GM12878 (cell line): ENCODE measurements at regions of chr3 and their contacts with region 1.

Region 1: DNA sequence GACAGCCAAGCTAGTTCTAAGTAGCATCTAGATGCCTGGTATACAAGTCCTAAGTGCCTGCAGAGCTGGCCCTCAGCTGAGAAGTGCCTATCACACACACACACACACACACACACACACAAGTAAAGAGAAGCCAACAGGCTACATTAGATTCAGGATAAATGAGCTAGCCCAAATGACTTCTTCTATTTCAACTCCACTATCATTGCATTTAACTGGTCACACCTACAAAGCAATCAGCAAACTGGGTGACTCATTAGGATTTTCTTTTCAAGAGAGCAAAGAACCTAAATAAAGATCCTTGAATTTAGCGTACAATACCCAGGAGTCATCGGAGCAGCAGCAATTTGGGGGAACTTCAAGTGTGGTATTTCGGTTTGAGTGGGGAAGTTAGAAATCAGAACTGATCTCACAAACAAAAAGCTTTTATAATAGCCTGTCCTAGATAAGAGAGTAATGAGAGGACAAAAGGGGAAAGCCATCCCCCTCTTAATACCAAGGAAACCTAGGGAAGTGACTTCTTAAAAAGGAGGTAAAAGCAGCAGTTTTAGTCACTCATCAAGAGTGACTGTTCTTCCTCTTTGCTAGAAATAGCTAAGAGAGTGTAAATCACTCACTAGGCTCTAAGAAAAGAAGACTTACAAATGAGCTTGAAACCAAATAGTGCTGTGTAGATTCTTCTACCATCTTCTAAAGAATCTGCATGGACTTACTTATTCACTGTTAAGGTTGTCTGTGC is 112.7 kb downstream of the TNIK start:
- DNase-seq: peak; percentile 95
- ATAC-seq: peak; percentile 84
- H3K4me3 ChIP-seq: peak overlapping the region; percentile 33
- H3K27ac ChIP-seq: peak overlapping the region; percentile 94
- H3K4me1 ChIP-seq: peaks cover 78% of the 10 kb centered on the region
- H3K27me3 ChIP-seq: no peaks in the 10 kb centered on the region
- CTCF ChIP-seq: no peak
- EP300 ChIP-seq: peak in 1 of 2 experiments; percentile 70; a peak in 3 of 4 replicates
- POLR2A ChIP-seq: no peak
- RAD21 ChIP-seq: no peak

Region 2: GRCh38 chr3:171086914-171087313 is 260.6 kb before region 1 on chr3:
- CTCF ChIA-PET with region 1: no interaction called
- POLR2A ChIA-PET with region 1: no interaction called
- RAD21 ChIA-PET with region 1: no interaction called
- SMC1A ChIA-PET with region 1: no interaction called
- in situ Hi-C with region 1: no loop called
- intact Hi-C with region 1: no loop called
- DNase-seq: no peak
- ATAC-seq: no peak
- H3K4me3 ChIP-seq: no peak overlapping the region
- H3K27ac ChIP-seq: no peak overlapping the region
- H3K4me1 ChIP-seq: no peaks in the 10 kb centered on the region
- H3K27me3 ChIP-seq: no peaks in the 10 kb centered on the region
- CTCF ChIP-seq: no peak
- EP300 ChIP-seq: no peak
- POLR2A ChIP-seq: no peak
- RAD21 ChIP-seq: no peak

Region 3: GRCh38 chr3:171257251-171258203 is 89.9 kb before region 1 on chr3:
- CTCF ChIA-PET with region 1: interaction called, 9 read pairs
- POLR2A ChIA-PET with region 1: interaction called, 7 read pairs
- RAD21 ChIA-PET with region 1: interaction called, 19 read pairs
- SMC1A ChIA-PET with region 1: interaction called, 80 read pairs
- in situ Hi-C with region 1: no loop called
- intact Hi-C with region 1: loop called (anchors 2 kb)
- DNase-seq: peak; percentile 76
- ATAC-seq: peak; percentile 74
- H3K4me3 ChIP-seq: peak overlapping the region; percentile 31; the same call in 1 of the 2 replicates
- H3K27ac ChIP-seq: peak overlapping the region; percentile 87
- H3K4me1 ChIP-seq: peaks cover 86% of the 10 kb centered on the region
- H3K27me3 ChIP-seq: no peaks in the 10 kb centered on the region
- CTCF ChIP-seq: no peak
- EP300 ChIP-seq: peak in 1 of 2 experiments; percentile 63; a peak in 2 of 4 replicates
- POLR2A ChIP-seq: no peak
- RAD21 ChIP-seq: 0 out of 2 replicates have a peak, but pooled peaks have one; percentile 10

Region 4: GRCh38 chr3:171306631-171307030 is 40.8 kb before region 1 on chr3:
- CTCF ChIA-PET with region 1: interaction called, 5 read pairs
- POLR2A ChIA-PET with region 1: interaction called, 4 read pairs
- RAD21 ChIA-PET with region 1: interaction called, 6 read pairs
- SMC1A ChIA-PET with region 1: interaction called, 70 read pairs
- in situ Hi-C with region 1: no loop called
- intact Hi-C with region 1: no loop called
- DNase-seq: no peak
- ATAC-seq: peak; percentile 15
- H3K4me3 ChIP-seq: no peak overlapping the region
- H3K27ac ChIP-seq: peak overlapping the region; percentile 38; the same call in 1 of the 2 replicates
- H3K4me1 ChIP-seq: peaks cover 13% of the 10 kb centered on the region
- H3K27me3 ChIP-seq: no peaks in the 10 kb centered on the region
- CTCF ChIP-seq: no peak
- EP300 ChIP-seq: no peak
- POLR2A ChIP-seq: no peak
- RAD21 ChIP-seq: no peak

Region 5: GRCh38 chr3:171358181-171358880 is 10.9 kb after region 1 on chr3:
- CTCF ChIA-PET with region 1: interaction called, 6 read pairs
- POLR2A ChIA-PET with region 1: interaction called, 8 read pairs
- RAD21 ChIA-PET with region 1: interaction called, 28 read pairs
- SMC1A ChIA-PET with region 1: interaction called, 24 read pairs
- in situ Hi-C with region 1: no loop called
- intact Hi-C with region 1: no loop called
- DNase-seq: no peak
- ATAC-seq: peak; percentile 84
- H3K4me3 ChIP-seq: no peak overlapping the region
- H3K27ac ChIP-seq: no peak overlapping the region; the same call in none of the 2 replicates
- H3K4me1 ChIP-seq: peaks cover 38% of the 10 kb centered on the region
- H3K27me3 ChIP-seq: no peaks in the 10 kb centered on the region
- CTCF ChIP-seq: no peak
- EP300 ChIP-seq: no peak
- POLR2A ChIP-seq: no peak
- RAD21 ChIP-seq: no peak

Region 6: GRCh38 chr3:171383206-171384018 is 35.9 kb after region 1 on chr3:
- CTCF ChIA-PET with region 1: interaction called, 3 read pairs
- POLR2A ChIA-PET with region 1: interaction called, 13 read pairs
- RAD21 ChIA-PET with region 1: interaction called, 10 read pairs
- SMC1A ChIA-PET with region 1: interaction called, 4 read pairs
- in situ Hi-C with region 1: no loop called
- intact Hi-C with region 1: no loop called
- DNase-seq: no peak
- ATAC-seq: peak; percentile 68
- H3K4me3 ChIP-seq: peak overlapping the region; percentile 8; the same call in 1 of the 2 replicates
- H3K27ac ChIP-seq: no peak overlapping the region
- H3K4me1 ChIP-seq: peaks cover 36% of the 10 kb centered on the region
- H3K27me3 ChIP-seq: no peaks in the 10 kb centered on the region
- CTCF ChIP-seq: no peak
- EP300 ChIP-seq: no peak
- POLR2A ChIP-seq: no peak
- RAD21 ChIP-seq: no peak

Region 7: DNA sequence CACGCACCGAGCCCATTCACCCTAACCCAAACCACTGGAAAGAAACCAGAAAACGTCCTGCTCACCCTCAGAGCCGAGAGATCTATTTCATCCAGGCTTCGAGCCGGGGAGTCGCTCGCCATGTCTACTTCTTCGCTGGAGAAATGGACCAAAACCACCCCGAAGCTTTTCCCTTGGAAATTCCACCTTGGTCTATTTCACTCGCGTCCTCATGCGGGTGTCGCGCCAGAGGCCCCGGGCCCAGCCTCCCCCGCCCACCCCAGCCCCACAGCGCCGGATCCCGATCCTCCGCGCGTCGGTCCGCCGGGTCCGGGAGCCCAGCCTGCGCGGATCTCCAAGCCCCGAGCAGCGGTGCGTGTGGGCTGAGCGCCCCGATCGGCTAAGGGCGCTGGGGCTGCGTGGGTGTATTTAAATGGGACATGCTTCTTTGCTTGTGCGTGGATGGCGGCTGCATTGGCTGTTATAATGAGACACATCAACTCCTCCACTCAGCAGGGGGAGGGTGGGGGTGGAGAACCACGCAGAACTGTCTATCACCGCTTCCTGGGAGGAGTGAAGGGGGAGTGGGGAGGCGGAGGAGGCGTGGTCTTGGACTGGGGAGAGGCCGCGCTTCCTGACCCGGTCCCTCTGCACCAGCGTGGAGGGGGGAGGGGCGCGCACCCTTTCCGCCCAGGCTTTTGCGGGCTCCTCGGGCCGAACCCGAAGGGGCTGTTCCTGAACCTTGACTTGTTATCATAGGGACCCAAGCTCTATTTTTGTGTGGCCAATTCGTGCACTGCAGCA is 112.7 kb after region 1 on chr3 and contains the start of gene TNIK:
- CTCF ChIA-PET with region 1: interaction called, 5 read pairs
- POLR2A ChIA-PET with region 1: interaction called, 9 read pairs
- RAD21 ChIA-PET with region 1: interaction called, 13 read pairs
- SMC1A ChIA-PET with region 1: interaction called, 26 read pairs
- in situ Hi-C with region 1: no loop called
- intact Hi-C with region 1: loop called (anchors 1 kb)
- DNase-seq: peak; percentile 95
- ATAC-seq: peak; percentile 85
- H3K4me3 ChIP-seq: peak within 1 kb of the TSS; percentile 98
- H3K27ac ChIP-seq: peak within 1 kb of the TSS; percentile 80
- H3K4me1 ChIP-seq: peaks cover 10% of the 10 kb centered on the region
- H3K27me3 ChIP-seq: no peaks in the 10 kb centered on the region
- CTCF ChIP-seq: peak in 2 of 3 experiments; percentile 26 to 44; a peak in 2 of 6 replicates
- EP300 ChIP-seq: peak; percentile 40 to 60; a peak in 2 of 4 replicates
- POLR2A ChIP-seq: peak; percentile 91
- RAD21 ChIP-seq: peak; percentile 23; the same call in 1 of the 2 replicates
- polyA plus RNA-seq, gene TNIK: 13.9 to 15.9 TPM

Region 8: GRCh38 chr3:172065967-172066762 is 718.7 kb after region 1 on chr3:
- CTCF ChIA-PET with region 1: no interaction called
- POLR2A ChIA-PET with region 1: no interaction called
- RAD21 ChIA-PET with region 1: no interaction called
- SMC1A ChIA-PET with region 1: no interaction called
- in situ Hi-C with region 1: no loop called
- intact Hi-C with region 1: no loop called
- DNase-seq: peak; percentile 21
- ATAC-seq: no peak
- H3K4me3 ChIP-seq: no peak overlapping the region
- H3K27ac ChIP-seq: no peak overlapping the region
- H3K4me1 ChIP-seq: peaks cover 19% of the 10 kb centered on the region
- H3K27me3 ChIP-seq: no peaks in the 10 kb centered on the region
- CTCF ChIP-seq: no peak
- EP300 ChIP-seq: no peak
- POLR2A ChIP-seq: no peak
- RAD21 ChIP-seq: no peak